Lower leg skin (tissue), 4 donors: ENCODE measurements at regions of chr16 and their contacts with region 1.

Region 1: DNA sequence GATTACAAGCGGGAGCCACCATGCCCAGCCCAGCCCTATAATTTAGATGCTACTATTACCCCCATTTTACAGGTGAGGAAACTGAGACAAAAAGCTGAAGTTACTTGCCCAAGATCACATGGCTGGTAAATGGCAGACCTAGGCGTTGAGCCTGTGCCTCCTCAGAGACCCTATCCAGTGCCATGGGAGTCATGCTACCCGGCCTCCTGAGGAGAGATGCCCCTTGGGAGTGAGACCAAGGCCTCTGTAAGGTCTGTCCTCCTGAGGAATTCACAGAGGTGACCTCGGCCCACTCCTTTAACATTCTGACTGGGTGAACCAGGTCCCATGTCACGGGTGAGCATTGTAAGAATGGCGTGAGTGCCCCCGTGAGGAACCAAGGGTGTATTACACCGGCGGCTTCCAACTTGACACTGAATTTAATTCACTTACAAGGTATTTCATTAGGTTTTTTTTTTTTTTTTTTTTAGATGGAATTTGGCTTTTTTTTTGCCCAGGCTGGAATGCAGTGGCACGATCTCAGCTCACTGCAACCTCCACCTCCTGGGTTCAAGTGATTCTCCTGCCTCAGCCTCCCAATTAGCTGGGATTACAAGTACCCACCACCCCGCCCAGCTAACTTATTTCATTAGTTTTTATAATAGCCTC is 95.7 kb downstream of the ABCC6 start:
- DNase-seq: peak; percentile 74 to 92
- H3K4me3 ChIP-seq: no peak overlapping the region
- CTCF ChIP-seq: peak in 1 of 3 donors; percentile 64
- POLR2A ChIP-seq: no peak

Region 2: DNA sequence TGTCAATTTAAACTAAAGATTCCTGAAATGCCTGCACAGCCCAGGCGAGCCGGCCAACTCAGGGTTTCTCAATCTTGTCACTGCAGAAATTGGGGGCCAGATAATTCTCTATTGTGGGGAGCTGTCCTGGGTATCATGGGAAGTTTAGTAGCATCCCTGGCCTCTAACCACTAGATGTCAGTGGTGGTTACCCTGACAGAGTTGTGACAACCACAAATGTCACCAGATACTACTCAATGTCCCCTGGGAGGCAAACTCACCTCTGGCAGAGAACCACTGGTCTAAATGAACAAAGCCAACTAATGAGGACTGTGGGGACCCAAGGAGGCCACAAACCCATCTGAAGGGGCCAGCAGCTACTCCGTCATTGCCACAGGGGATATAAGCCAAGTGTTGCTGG is 361.7 kb before region 1 on chr16:
- intact Hi-C with region 1: loop called (anchors 5 kb)
- DNase-seq: no peak
- H3K4me3 ChIP-seq: no peak overlapping the region
- CTCF ChIP-seq: no peak
- POLR2A ChIP-seq: no peak

Region 3: GRCh38 chr16:15874745-15875314 is 252.8 kb before region 1 on chr16:
- intact Hi-C with region 1: loop called (anchors 10 kb)
- DNase-seq: peak; percentile 40 to 86
- H3K4me3 ChIP-seq: no peak overlapping the region
- CTCF ChIP-seq: no peak
- POLR2A ChIP-seq: no peak